ENCODE measurements at regions of chr5 and their contacts with region 1.

Region 1: DNA sequence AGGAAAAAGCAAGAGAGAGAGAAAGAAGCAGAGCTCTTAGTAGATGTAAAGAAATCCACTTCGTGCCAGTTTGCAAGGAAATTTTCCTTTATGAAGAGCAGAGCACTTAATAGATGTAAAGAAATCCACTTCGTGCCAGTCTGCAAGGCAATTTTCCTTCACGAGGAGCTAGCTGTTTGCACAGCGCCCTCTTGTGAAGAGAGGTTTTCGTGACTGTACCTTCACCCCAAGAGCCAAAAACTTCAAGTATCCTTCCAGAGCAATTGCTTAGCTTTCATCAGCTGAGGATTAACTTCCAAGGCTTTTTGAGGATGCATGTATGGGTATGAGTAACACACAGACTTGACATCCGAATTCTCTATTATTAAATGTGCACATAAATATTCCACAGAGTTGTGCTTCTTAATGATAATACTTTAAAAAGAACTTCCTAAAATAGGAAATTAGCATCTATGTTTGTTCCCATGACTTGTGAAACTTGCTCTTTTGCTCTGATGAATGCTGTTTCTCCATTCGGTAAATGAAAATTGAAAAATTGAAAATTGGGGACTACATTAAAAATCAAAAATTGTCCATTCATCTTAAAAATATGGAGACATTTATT is 525.6 kb downstream of the PDE4D start:
- DNase-seq: peak; percentile 39
- H3K4me3 ChIP-seq: no peak overlapping the region; a peak in 1 of 4 replicates
- H3K27ac ChIP-seq: no peak overlapping the region
- H3K4me1 ChIP-seq: no peaks in the 10 kb centered on the region; a peak in 2 of 4 replicates
- H3K27me3 ChIP-seq: no peaks in the 10 kb centered on the region
- CTCF ChIP-seq: peak; percentile 83
- EP300 ChIP-seq: no peak
- RAD21 ChIP-seq: peak; percentile 89

Region 2: GRCh38 chr5:59193616-59194319 is 174.1 kb before region 1 on chr5:
- CTCF ChIA-PET with region 1: interaction called, 112 read pairs
- POLR2A ChIA-PET with region 1: interaction called, 5 read pairs
- DNase-seq: no peak
- H3K4me3 ChIP-seq: no peak overlapping the region
- H3K27ac ChIP-seq: peak overlapping the region in 1 of 2 experiments; percentile 57; a peak in 2 of 4 replicates
- H3K4me1 ChIP-seq: peaks cover 0 to 5% of the 10 kb centered on the region in 2 experiments; a peak in 2 of 4 replicates
- H3K27me3 ChIP-seq: no peaks in the 10 kb centered on the region
- CTCF ChIP-seq: no peak
- EP300 ChIP-seq: no peak
- RAD21 ChIP-seq: no peak

Region 3: GRCh38 chr5:59206132-59206581 is 161.7 kb before region 1 on chr5:
- CTCF ChIA-PET with region 1: interaction called, 45 read pairs
- POLR2A ChIA-PET with region 1: no interaction called
- DNase-seq: no peak
- H3K4me3 ChIP-seq: no peak overlapping the region
- H3K27ac ChIP-seq: peak overlapping the region; percentile 26 to 50; a peak in 3 of 4 replicates
- H3K4me1 ChIP-seq: peaks cover 0 to 19% of the 10 kb centered on the region in 2 experiments; a peak in 2 of 4 replicates
- H3K27me3 ChIP-seq: no peaks in the 10 kb centered on the region
- CTCF ChIP-seq: no peak
- EP300 ChIP-seq: peak; percentile 26 to 74; a peak in 2 of 4 replicates
- RAD21 ChIP-seq: no peak

Region 4: GRCh38 chr5:59218424-59219045 is 149.4 kb before region 1 on chr5:
- CTCF ChIA-PET with region 1: interaction called, 45 read pairs
- POLR2A ChIA-PET with region 1: no interaction called
- DNase-seq: peak; percentile 13
- H3K4me3 ChIP-seq: no peak overlapping the region
- H3K27ac ChIP-seq: no peak overlapping the region
- H3K4me1 ChIP-seq: peaks cover 0 to 5% of the 10 kb centered on the region in 2 experiments; a peak in 2 of 4 replicates
- H3K27me3 ChIP-seq: no peaks in the 10 kb centered on the region
- CTCF ChIP-seq: peak; percentile 66
- EP300 ChIP-seq: no peak
- RAD21 ChIP-seq: peak; percentile 46

Region 5: DNA sequence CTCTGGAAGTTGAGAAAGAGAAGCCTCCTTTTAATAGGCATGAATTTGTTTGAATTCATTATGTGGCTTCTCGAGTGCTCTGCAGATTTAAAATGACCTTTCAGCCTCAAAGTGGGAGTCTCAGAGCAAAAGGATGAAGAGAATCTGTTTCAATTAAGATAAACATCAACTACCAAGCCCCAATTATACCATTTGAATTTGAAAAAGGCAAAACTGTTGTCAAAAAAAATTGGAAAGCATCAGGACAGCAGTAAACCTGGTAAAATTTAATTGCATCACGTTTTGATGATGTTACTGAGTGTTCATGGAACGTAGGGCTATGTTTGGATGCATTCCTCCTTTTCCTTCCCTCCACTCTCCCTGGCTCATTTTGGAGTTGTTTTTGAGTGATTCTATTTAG is 111.6 kb before region 1 on chr5:
- CTCF ChIA-PET with region 1: no interaction called
- POLR2A ChIA-PET with region 1: no interaction called
- DNase-seq: no peak
- H3K4me3 ChIP-seq: no peak overlapping the region
- H3K27ac ChIP-seq: no peak overlapping the region
- H3K4me1 ChIP-seq: no peaks in the 10 kb centered on the region; a peak in 2 of 4 replicates
- H3K27me3 ChIP-seq: no peaks in the 10 kb centered on the region
- CTCF ChIP-seq: no peak
- EP300 ChIP-seq: no peak
- RAD21 ChIP-seq: no peak

Region 6: DNA sequence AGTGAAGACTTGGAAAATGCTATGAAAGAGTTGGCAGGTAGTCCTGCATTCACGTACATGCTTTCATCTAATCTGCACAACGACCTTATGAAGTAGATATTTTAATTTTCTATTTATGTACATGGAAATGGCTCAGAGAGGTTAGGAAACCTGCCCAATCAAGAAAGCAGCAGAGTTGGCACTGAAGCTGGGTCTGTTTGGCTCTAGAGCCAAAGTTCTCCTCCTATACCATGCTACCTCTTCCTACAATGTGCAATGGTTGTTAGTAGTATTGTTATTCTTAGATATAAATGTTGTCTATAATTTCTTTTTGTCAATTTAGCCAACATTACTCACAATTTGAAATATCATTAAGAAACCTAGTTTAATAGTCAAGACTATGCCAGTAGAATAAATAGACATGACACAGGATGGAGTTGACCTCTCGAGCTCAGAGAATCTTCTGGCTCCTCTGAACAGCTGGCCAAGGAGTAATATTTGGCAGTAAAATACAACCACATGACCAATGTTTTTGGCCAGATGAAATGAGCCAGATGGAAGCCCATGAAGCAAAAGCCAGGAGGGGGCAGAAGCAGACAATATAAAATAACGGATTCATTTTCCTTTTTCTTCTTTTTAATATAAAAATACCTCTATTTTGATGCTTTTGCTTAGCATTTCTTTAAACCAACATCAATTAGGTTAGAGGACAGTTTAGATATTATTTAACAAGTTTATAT is 16.7 kb before region 1 on chr5:
- CTCF ChIA-PET with region 1: interaction called, 95 read pairs
- POLR2A ChIA-PET with region 1: no interaction called
- DNase-seq: no peak
- H3K4me3 ChIP-seq: no peak overlapping the region
- H3K27ac ChIP-seq: no peak overlapping the region
- H3K4me1 ChIP-seq: peaks cover 0 to 2% of the 10 kb centered on the region in 2 experiments; a peak in 2 of 4 replicates
- H3K27me3 ChIP-seq: no peaks in the 10 kb centered on the region
- CTCF ChIP-seq: no peak
- EP300 ChIP-seq: no peak
- RAD21 ChIP-seq: no peak

Region 7: GRCh38 chr5:59777028-59777427 is 409.1 kb after region 1 on chr5:
- CTCF ChIA-PET with region 1: no interaction called
- POLR2A ChIA-PET with region 1: no interaction called
- DNase-seq: no peak
- H3K4me3 ChIP-seq: no peak overlapping the region
- H3K27ac ChIP-seq: no peak overlapping the region
- H3K4me1 ChIP-seq: no peaks in the 10 kb centered on the region; a peak in 1 of 4 replicates
- H3K27me3 ChIP-seq: no peaks in the 10 kb centered on the region
- CTCF ChIP-seq: no peak
- EP300 ChIP-seq: no peak
- RAD21 ChIP-seq: no peak

Measured in SK-N-SH (cell line).